ENCODE measurements at regions of chr4 and their contacts with region 1.

Region 1: GRCh38 chr4:173301518-173302201 is 32.5 kb downstream of the HMGB2 start:
- DNase-seq: peak; percentile 16
- H3K4me3 ChIP-seq: no peak overlapping the region
- H3K27ac ChIP-seq: no peak overlapping the region
- H3K27me3 ChIP-seq: no peaks in the 10 kb centered on the region
- CTCF ChIP-seq: peak; percentile 74

Region 2: GRCh38 chr4:173135241-173135847 is 166.3 kb before region 1 on chr4:
- CTCF ChIA-PET with region 1: no interaction called
- POLR2A ChIA-PET with region 1: no interaction called
- DNase-seq: no peak
- H3K4me3 ChIP-seq: no peak overlapping the region
- H3K27ac ChIP-seq: no peak overlapping the region
- H3K27me3 ChIP-seq: no peaks in the 10 kb centered on the region
- CTCF ChIP-seq: no peak

Region 3: DNA sequence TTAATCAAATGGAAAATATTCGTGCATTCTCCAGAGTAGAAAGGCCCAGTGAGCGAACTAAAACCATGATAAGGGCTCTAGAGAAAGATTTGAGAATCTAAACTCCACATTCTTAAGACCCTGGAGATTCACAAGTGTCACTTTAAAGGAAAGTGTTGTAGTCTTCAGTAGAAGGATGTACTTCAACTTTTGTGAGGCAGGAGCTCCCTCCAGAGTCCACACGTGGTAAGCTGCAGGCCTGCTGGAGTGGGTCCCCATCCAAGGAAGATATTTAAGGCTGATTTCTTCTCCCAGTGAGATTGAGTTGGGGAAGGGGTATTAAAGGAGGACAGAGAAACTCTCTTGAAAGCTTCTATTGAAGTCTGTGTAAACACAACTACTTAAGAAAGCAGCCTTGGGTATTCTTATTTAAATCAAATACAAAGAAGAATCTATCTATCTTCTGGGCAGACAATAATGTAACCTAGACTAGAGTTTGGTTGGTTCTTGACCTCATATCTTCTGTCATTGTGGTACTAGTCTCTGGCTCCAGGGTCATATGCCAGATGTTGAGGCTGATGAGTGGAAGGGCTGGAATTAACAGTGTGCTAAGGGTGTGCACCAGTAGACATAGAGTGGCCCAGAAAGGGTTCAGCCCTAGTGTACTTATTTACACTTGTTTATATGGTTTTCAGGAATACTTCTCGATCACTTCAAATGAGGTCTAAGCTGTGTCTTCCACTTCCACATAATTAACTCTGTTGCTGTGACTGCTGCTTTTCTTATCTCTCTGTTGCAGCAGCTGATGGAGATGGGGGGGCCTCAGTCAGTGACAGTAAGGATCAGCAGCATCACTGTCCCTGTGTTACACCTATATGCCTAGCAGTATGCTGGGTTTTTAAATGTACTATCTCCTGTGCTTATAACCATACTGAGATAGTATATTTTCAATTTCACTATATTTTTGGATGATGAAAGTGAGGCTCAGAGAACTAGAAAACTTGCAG is 43.6 kb before region 1 on chr4:
- CTCF ChIA-PET with region 1: interaction called, 48 read pairs
- POLR2A ChIA-PET with region 1: no interaction called
- DNase-seq: peak; percentile 44
- H3K4me3 ChIP-seq: no peak overlapping the region
- H3K27ac ChIP-seq: no peak overlapping the region
- H3K27me3 ChIP-seq: no peaks in the 10 kb centered on the region
- CTCF ChIP-seq: peak; percentile 91

Region 4: DNA sequence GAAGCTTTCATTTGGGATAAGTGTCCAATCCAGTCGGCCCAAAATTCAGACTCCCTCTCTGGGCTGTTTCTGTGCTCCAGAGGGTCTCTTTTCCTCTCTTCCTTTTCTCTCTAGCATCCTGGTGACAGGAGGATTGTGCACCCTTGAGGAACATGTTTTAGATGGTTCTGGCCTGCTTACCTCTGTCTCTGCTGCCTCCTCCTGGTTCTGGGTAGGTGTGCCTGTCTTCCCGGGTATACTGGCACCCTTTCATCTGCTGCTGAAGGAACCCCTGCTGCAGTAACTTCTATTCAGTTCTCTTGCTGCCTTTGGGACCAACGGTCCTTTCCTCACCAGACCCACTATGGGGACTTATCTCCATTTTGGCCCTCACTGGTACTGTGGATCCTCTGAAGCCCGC is 20.7 kb before region 1 on chr4:
- CTCF ChIA-PET with region 1: interaction called, 56 read pairs
- POLR2A ChIA-PET with region 1: no interaction called
- DNase-seq: no peak
- H3K4me3 ChIP-seq: no peak overlapping the region
- H3K27ac ChIP-seq: no peak overlapping the region
- H3K27me3 ChIP-seq: no peaks in the 10 kb centered on the region
- CTCF ChIP-seq: no peak

Region 5: GRCh38 chr4:173318648-173319211 is 17.1 kb after region 1 on chr4:
- CTCF ChIA-PET with region 1: interaction called, 46 read pairs
- POLR2A ChIA-PET with region 1: no interaction called
- DNase-seq: no peak
- H3K4me3 ChIP-seq: no peak overlapping the region
- H3K27ac ChIP-seq: no peak overlapping the region
- H3K27me3 ChIP-seq: no peaks in the 10 kb centered on the region
- CTCF ChIP-seq: peak; percentile 27; the same call in 1 of the 2 replicates

Region 6: DNA sequence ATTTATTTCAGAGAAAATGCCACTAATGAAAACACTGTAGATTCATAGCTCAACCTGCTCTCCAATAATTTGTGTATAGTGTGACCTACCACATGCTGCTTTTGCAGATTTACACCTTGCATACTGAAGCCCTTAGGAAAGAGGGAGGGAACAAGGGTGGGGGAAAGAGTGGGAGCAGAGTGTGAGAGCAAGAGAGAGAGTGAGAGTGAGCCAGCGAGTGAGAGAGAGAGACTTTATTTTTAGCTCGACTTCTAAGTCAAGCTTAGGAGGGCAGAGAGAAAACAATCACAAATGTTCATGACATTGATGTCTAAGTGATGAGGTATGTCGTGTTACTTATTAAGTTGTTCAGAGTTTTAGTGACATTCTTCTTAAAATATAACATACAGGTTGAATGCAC is 340.8 kb after region 1 on chr4:
- CTCF ChIA-PET with region 1: no interaction called
- POLR2A ChIA-PET with region 1: no interaction called
- DNase-seq: no peak
- H3K4me3 ChIP-seq: no peak overlapping the region
- H3K27ac ChIP-seq: no peak overlapping the region
- H3K27me3 ChIP-seq: no peaks in the 10 kb centered on the region
- CTCF ChIP-seq: no peak

Measured in AG04450 (cell line).